ENCODE measurements at regions of chr16 and their contacts with region 1.

Region 1: DNA sequence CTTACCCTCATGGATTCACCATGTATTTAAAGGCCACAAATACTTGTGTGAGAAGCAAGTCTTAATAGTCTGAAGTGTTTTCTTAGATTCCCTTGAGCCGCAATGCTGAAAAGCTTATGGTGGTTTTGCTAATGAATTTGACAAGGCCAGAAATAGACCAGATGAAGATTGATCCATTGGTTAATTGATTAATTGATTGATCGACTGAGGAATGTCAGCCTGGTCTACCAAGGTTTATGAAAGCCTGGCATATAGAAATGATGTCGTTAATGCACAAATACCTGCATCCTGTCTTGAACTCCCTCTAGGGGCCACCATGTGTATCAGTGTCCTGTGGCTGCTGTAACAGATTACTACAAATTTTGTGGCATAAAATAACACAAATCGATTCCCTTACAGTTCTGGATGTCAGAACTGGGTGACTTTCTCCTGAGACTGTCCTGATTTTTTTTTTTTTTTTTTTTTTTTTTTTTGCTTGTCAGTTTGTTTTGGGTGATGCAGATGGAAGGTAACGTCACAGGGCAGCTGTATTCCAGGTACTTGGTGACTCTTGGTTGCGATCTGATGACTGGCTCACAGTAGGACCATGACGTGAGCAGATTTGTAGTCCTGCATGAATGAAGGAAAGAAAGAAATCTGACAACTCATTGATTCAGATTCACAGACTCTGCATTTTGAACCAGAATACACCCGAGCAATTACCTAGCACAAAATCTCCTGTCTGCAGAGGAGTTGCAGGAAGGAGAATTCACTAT is 553.1 kb downstream of the MAF start:
- DNase-seq: no peak
- ATAC-seq: peak; percentile 50
- H3K4me3 Mint-ChIP-seq: no peak overlapping the region
- H3K27ac Mint-ChIP-seq: no peak overlapping the region
- H3K4me1 Mint-ChIP-seq: no peaks in the 10 kb centered on the region
- H3K27me3 Mint-ChIP-seq: no peaks in the 10 kb centered on the region
- CTCF ChIP-seq: peak; percentile 47

Region 2: DNA sequence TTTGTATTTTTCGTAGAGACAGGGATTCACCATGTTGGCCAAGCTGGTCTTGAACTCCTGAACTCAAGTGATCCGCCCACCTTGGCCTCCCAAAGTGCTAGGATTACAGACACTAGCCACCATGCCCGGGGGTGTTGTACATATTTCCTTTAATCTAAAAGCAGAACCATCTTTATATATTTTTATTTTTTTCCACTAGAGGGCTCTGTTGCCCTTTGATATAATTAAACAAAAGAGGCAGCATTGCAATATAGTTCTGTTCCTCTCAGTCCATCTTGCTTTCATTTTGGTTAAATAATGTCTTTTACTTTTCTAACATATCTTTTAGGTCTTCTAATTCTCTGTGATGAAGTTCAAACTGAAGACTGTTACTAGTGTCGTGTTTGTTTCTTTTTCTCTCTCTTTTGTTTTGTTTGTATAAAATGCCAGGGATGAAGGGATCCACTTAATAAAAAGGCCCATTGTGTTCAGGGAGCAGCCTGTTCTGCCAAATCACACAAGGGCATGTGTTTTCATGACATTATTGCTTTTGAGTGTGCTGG is 924.6 kb before region 1 on chr16:
- CTCF ChIA-PET with region 1: no interaction called
- POLR2A ChIA-PET with region 1: no interaction called
- intact Hi-C with region 1: loop called (anchors 5 kb)
- DNase-seq: no peak
- ATAC-seq: peak; percentile 58
- H3K4me3 Mint-ChIP-seq: no peak overlapping the region
- H3K27ac Mint-ChIP-seq: no peak overlapping the region
- H3K4me1 Mint-ChIP-seq: peaks cover 3% of the 10 kb centered on the region
- H3K27me3 Mint-ChIP-seq: no peaks in the 10 kb centered on the region
- CTCF ChIP-seq: no peak

Region 3: DNA sequence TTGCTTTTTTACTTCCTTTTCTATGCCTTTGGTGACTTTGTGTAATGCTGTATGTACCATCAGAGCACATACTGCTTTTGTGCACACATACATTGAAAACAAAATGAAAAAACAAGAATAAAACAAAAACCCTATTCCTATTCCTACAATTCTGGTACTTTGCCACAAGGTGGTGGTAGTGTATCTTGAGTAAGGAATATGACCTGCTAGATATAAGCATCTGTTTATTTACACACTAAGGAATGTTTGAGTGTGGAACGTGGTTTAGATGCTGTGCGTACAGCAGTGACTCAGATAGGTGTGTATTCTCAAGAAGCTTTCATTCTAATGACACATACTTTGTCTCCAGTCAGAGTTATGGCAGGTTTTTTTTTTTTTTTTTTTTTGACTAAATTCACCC is 341.7 kb before region 1 on chr16:
- CTCF ChIA-PET with region 1: no interaction called
- POLR2A ChIA-PET with region 1: no interaction called
- intact Hi-C with region 1: loop called (anchors 5 kb)
- DNase-seq: no peak
- ATAC-seq: no peak
- H3K4me3 Mint-ChIP-seq: no peak overlapping the region
- H3K27ac Mint-ChIP-seq: no peak overlapping the region
- H3K4me1 Mint-ChIP-seq: peaks cover 3% of the 10 kb centered on the region
- H3K27me3 Mint-ChIP-seq: no peaks in the 10 kb centered on the region
- CTCF ChIP-seq: no peak

Region 4: DNA sequence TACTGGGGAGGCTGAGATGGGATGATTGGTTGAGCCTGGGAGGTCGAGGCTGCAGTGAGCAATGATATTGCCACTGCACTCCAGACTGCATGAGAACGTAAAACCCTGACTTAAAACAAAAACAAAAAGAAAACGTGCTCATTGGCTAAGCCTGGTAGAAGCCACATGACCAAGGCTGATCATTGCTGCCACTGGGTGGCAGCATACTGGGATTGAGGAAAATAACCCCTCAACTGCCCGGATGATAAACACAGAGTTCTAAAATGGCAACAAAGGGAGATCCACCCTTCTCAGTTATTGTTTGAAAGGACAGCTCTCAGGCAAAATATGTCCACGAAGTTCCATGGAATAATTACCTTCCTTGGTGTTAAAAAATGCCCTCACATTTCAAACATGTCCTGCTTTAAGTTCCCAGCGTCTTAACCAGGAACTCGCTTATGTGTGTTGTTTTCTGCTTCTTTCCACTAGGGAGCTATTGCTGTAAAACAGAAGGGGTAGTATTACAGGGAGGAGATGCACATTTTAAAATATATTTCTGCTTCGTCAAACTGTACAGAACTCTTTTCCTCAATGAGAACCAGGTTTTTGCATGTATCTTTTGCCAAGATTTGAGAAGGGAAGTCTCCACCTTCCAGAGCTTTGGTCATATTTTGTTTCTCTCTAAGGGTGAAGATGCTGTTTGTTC is 122.2 kb before region 1 on chr16:
- CTCF ChIA-PET with region 1: interaction called, 8 read pairs
- POLR2A ChIA-PET with region 1: no interaction called
- intact Hi-C with region 1: loop called (anchors 1 kb)
- DNase-seq: no peak
- ATAC-seq: no peak
- H3K4me3 Mint-ChIP-seq: no peak overlapping the region
- H3K27ac Mint-ChIP-seq: no peak overlapping the region
- H3K4me1 Mint-ChIP-seq: no peaks in the 10 kb centered on the region
- H3K27me3 Mint-ChIP-seq: no peaks in the 10 kb centered on the region
- CTCF ChIP-seq: no peak

Region 5: DNA sequence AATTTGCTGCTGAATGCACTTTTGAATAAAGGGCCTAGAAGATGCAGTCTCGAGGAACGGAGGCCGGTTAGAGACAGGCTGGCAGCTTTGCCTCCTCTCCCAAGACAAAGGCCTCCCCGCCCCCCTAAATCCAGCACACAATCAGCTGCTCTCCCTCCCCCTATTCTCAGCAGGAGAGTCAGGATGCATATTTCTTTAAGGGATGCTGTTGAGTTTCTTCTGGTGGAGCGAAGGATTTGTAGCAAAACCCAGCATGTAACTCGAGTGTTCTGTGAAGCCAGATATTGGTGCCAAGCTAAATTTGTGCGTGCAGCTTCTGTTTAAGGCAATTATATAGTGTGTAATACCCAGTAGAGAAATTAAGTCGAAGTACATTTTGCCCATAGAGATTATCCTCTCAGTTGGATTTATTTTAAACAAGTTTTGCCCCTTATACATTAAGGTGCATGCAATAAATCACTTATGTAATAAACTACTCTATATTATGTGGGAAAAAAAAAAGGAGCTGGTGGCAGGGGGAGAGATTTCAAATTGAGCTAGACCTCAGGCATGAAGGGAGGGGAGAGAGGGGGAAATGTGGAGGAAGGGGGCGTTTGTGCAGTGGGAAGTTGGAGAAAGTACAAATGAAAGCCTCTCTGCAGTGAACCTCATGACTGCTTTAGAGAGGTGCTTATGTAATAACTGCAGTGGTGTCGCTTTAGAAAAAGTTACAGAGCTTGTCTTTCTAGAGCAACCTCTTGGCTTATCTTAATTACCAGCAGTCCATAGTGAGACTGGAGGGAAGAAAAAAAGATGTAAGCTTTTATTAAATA is 46.0 kb before region 1 on chr16:
- CTCF ChIA-PET with region 1: no interaction called
- POLR2A ChIA-PET with region 1: no interaction called
- intact Hi-C with region 1: loop called (anchors 5 kb)
- DNase-seq: no peak
- ATAC-seq: no peak
- H3K4me3 Mint-ChIP-seq: no peak overlapping the region
- H3K27ac Mint-ChIP-seq: no peak overlapping the region
- H3K4me1 Mint-ChIP-seq: no peaks in the 10 kb centered on the region
- H3K27me3 Mint-ChIP-seq: no peaks in the 10 kb centered on the region
- CTCF ChIP-seq: no peak

Region 6: GRCh38 chr16:79012731-79013434 is 34.5 kb before region 1 on chr16:
- CTCF ChIA-PET with region 1: no interaction called
- POLR2A ChIA-PET with region 1: interaction called, 3 read pairs
- intact Hi-C with region 1: loop called (anchors 2 kb)
- DNase-seq: peak; percentile 22
- ATAC-seq: peak; percentile 98
- H3K4me3 Mint-ChIP-seq: peak overlapping the region; percentile 47
- H3K27ac Mint-ChIP-seq: peak overlapping the region; percentile 18
- H3K4me1 Mint-ChIP-seq: peaks cover 26% of the 10 kb centered on the region
- H3K27me3 Mint-ChIP-seq: no peaks in the 10 kb centered on the region
- CTCF ChIP-seq: no peak